ENCODE measurements at regions of chr7 and their contacts with region 1.

Region 1: GRCh38 chr7:87416682-87417587 is 58.5 kb downstream of the ABCB4 start:
- DNase-seq: no peak
- ATAC-seq: peak; percentile 65

Region 2: GRCh38 chr7:87312215-87312865 is 104.6 kb before region 1 on chr7:
- intact Hi-C with region 1: loop called (anchors 5 kb)
- DNase-seq: no peak
- ATAC-seq: peak; percentile 73

Region 3: DNA sequence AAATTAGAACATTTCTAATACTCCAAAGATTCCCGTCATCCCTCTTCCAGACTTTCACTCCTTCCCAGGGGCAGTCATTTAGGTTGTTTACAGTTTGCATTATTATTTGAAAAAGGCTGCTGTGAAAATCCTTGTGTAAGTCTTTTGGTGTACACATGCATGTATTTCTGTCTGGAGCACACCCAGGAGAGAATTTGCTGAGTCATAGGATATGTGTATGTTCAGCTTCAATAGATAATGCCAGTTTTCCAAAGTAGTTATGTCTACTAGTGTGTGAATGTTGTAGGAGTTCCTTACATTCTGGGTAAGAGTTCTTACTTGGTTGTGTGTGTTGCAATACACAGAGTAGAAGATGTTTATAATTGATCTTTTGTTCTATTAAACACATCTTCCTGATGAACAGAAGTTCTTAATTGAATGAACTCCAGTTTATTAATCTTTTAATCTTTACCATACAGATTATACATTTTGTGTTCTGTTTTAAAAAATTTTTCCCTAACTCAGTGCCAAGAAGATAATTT is 46.2 kb before region 1 on chr7:
- intact Hi-C with region 1: no loop called
- DNase-seq: no peak
- ATAC-seq: no peak